Activated naive CD4-positive, alpha-beta T cell treated with anti-CD3 and anti-CD28 coated beads for 36 hours (primary cell): ENCODE measurements at regions of chr4 and their contacts with region 1.

Region 1: GRCh38 chr4:142282870-142283431 is 563.1 kb downstream of the INPP4B start:
- DNase-seq: peak; percentile 60
- H3K4me3 Mint-ChIP-seq: no peak overlapping the region
- H3K27ac Mint-ChIP-seq: no peak overlapping the region
- H3K4me1 Mint-ChIP-seq: peaks cover 29% of the 10 kb centered on the region
- H3K27me3 Mint-ChIP-seq: no peaks in the 10 kb centered on the region

Region 2: GRCh38 chr4:142434519-142435239 is 151.7 kb after region 1 on chr4:
- CTCF ChIA-PET with region 1: no interaction called
- intact Hi-C with region 1: loop called (anchors 1 kb)
- DNase-seq: no peak
- H3K4me3 Mint-ChIP-seq: no peak overlapping the region
- H3K27ac Mint-ChIP-seq: no peak overlapping the region
- H3K4me1 Mint-ChIP-seq: peaks cover 40% of the 10 kb centered on the region
- H3K27me3 Mint-ChIP-seq: no peaks in the 10 kb centered on the region

Region 3: DNA sequence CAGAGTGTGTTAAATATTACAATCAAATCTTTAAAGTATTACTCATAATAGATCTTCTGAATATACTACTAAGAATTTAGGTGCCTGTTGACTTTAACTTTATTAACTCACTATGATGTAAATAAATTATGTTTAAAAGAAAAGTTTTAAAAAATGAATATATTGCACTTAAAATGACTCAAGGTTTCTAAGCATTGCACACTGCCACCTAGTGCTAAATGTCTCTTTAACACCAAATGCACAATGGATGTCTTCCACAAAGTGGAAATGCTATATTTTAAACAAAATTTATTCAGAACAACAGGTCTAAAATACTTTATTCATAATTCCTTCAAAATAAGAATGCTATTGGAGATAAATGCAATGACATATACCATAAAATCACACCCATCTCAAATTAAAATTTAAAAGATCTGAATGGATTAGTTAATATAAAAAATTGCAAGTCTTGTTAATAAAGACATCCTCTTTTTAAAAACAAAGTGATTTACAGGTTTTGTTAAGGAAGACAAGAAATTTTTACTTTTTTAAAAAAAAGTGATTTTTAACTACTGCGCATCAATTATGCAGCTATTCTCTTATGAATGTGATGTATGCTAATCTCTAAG is 557.7 kb after region 1 on chr4:
- CTCF ChIA-PET with region 1: no interaction called
- intact Hi-C with region 1: loop called (anchors 1 kb)
- DNase-seq: no peak
- H3K4me3 Mint-ChIP-seq: no peak overlapping the region
- H3K27ac Mint-ChIP-seq: no peak overlapping the region
- H3K4me1 Mint-ChIP-seq: peaks cover 31% of the 10 kb centered on the region
- H3K27me3 Mint-ChIP-seq: no peaks in the 10 kb centered on the region